ENCODE measurements at regions of chr3 and their contacts with region 1.

Region 1: DNA sequence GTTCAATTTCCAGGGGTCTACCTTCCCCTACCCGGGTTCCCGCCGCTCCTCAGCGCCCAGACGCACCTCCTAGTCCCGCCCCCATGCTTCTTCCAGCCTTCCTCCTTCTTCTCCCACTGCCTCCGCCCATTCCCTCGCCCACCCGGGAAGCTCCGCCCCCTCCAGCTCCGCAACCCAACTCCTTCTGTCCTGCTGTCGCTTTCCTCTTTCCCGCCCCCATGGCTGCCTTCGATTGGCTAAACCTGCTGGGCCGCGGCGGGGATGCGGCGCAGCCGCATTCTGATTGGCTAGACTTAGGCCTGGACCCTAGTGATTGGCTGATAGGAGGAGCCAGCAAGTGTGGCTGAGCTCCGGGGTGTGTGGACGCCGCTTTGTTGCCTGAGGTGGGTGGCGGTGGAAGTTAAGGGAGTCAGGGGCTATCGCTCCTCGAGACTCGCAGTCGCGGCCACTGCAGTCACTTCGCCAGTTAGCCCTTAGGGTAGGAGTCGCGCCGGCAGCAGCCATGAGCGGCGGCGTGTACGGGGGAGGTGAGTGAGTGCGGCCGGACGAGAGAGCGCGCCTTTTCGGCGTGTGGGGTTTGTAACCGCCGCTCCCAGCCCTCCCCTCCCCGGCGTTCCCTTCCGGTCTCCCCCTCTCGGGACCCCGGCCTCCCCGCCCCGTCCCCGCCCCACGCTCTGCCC is at the start of gene ACTL6A:
- DNase-seq: peak; percentile 100
- ATAC-seq: peak; percentile 95
- H3K4me3 Mint-ChIP-seq: peak within 1 kb of the TSS; percentile 98
- H3K27ac Mint-ChIP-seq: peak within 1 kb of the TSS; percentile 99
- H3K4me1 Mint-ChIP-seq: peaks cover 17% of the 10 kb centered on the region
- H3K27me3 Mint-ChIP-seq: no peaks in the 10 kb centered on the region
- CTCF ChIP-seq: no peak
- total RNA-seq, gene ACTL6A: 71.6 to 82.9 TPM (median 74.6 TPM) in 3 replicates

Region 2: GRCh38 chr3:179391906-179392305 is 170.8 kb before region 1 on chr3:
- CTCF ChIA-PET with region 1: no interaction called
- POLR2A ChIA-PET with region 1: no interaction called
- DNase-seq: no peak
- ATAC-seq: no peak
- H3K4me3 Mint-ChIP-seq: no peak overlapping the region
- H3K27ac Mint-ChIP-seq: no peak overlapping the region
- H3K4me1 Mint-ChIP-seq: no peaks in the 10 kb centered on the region
- H3K27me3 Mint-ChIP-seq: no peaks in the 10 kb centered on the region
- CTCF ChIP-seq: no peak

Region 3: DNA sequence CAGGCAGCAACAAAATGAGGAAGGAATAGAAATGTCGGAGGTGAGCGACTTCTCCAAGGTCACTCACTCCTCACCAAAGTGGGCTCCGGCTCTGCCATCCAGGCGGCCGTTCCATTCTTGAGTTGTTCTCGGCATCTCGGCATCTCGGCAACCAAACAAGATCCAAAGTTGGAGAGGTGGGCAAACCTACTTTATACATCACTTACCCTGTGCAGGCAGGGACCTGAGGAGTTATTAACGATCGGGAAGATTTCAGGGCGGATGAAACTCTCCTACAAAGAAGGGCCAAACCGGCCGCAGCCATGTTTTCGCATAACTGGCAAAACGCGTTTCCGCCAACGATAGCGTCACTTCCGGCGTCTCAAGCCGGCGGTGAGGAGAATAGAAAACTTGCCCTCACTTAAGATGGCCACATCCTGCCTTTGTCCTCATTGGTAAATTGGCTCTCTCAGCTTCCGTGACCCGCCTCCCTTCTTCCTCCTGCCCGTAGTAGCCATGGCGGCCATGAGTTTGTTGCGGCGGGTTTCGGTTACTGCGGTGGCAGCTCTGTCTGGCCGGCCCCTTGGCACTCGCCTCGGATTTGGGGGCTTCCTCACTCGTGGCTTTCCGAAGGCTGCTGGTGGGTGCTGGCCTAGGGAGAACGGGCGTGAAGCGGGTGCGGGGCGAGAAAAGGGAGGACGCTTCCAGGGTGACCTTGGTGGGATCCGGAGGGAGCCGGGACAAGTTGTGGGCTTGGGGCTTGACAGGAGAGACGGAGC is 41.8 kb after region 1 on chr3 and contains the starts of genes MRPL47 and NDUFB5:
- CTCF ChIA-PET with region 1: no interaction called
- POLR2A ChIA-PET with region 1: interaction called, 10 read pairs
- DNase-seq: peak; percentile 91
- ATAC-seq: peak; percentile 99
- H3K4me3 Mint-ChIP-seq: peak within 1 kb of the TSS; percentile 99
- H3K27ac Mint-ChIP-seq: peak within 1 kb of the TSS; percentile 100
- H3K4me1 Mint-ChIP-seq: peaks cover 4% of the 10 kb centered on the region
- H3K27me3 Mint-ChIP-seq: no peaks in the 10 kb centered on the region
- CTCF ChIP-seq: no peak
- total RNA-seq, gene MRPL47: 55.9 to 68.9 TPM (median 61.3 TPM) in 3 replicates
- total RNA-seq, gene NDUFB5: 95.6 to 114 TPM (median 104 TPM) in 3 replicates

Region 4: DNA sequence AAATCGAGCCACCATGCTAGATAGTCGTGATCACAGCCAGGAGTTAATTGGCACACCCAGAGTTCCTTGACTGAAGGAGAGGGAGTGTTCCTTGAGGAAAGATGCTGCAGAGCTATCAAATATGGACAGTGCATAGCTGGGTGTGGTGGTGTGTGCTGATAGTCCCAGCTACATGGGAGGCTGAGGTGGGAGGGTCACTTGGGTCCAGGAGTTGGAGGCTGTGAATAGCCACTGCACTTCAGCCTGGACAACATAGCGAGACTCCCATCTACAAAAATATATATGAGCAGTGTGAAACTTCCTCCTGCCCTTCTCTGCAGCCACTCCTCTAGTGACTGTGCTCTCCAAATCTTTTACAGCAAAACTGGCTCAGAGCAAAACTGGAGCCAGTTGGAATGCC is 80.1 kb after region 1 on chr3:
- CTCF ChIA-PET with region 1: no interaction called
- POLR2A ChIA-PET with region 1: no interaction called
- DNase-seq: no peak
- ATAC-seq: no peak
- H3K4me3 Mint-ChIP-seq: no peak overlapping the region
- H3K27ac Mint-ChIP-seq: no peak overlapping the region
- H3K4me1 Mint-ChIP-seq: peaks cover 4% of the 10 kb centered on the region; the same call in 1 of the 2 replicates
- H3K27me3 Mint-ChIP-seq: no peaks in the 10 kb centered on the region
- CTCF ChIP-seq: no peak

Region 5: DNA sequence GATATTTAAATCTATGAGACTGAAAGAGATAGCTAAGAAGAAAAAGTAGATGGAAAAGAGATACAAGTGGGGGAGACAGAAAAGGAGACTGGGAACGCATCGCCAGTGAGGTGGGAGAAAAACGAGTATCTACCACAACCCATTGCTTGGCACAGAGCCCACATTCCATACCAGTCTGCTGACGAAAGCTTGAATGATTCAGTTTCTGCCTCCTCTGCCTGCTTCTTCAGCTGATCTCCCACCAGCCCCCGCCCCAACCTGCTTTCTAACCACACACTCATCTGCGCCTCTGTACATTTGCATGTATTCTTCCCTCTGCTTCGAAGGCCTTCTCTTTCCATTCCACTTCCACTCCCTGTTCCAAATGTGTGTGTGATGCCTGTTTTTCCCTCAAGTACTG is 278.3 kb after region 1 on chr3:
- CTCF ChIA-PET with region 1: no interaction called
- POLR2A ChIA-PET with region 1: no interaction called
- DNase-seq: no peak
- ATAC-seq: no peak
- H3K4me3 Mint-ChIP-seq: no peak overlapping the region
- H3K27ac Mint-ChIP-seq: no peak overlapping the region
- H3K4me1 Mint-ChIP-seq: peaks cover 34% of the 10 kb centered on the region
- H3K27me3 Mint-ChIP-seq: no peaks in the 10 kb centered on the region; the same call in 1 of the 2 replicates
- CTCF ChIP-seq: no peak

Region 6: GRCh38 chr3:179967622-179968021 is 404.9 kb after region 1 on chr3:
- CTCF ChIA-PET with region 1: no interaction called
- POLR2A ChIA-PET with region 1: no interaction called
- DNase-seq: no peak
- ATAC-seq: peak; percentile 38; the same call in 1 of the 2 replicates
- H3K4me3 Mint-ChIP-seq: no peak overlapping the region
- H3K27ac Mint-ChIP-seq: no peak overlapping the region
- H3K4me1 Mint-ChIP-seq: peaks cover 11% of the 10 kb centered on the region
- H3K27me3 Mint-ChIP-seq: no peaks in the 10 kb centered on the region
- CTCF ChIP-seq: no peak

Measured in WTC11 (cell line).